Endothelial cell of umbilical vein (primary cell): ENCODE measurements at regions of chr1 and their contacts with region 1.

Region 1: DNA sequence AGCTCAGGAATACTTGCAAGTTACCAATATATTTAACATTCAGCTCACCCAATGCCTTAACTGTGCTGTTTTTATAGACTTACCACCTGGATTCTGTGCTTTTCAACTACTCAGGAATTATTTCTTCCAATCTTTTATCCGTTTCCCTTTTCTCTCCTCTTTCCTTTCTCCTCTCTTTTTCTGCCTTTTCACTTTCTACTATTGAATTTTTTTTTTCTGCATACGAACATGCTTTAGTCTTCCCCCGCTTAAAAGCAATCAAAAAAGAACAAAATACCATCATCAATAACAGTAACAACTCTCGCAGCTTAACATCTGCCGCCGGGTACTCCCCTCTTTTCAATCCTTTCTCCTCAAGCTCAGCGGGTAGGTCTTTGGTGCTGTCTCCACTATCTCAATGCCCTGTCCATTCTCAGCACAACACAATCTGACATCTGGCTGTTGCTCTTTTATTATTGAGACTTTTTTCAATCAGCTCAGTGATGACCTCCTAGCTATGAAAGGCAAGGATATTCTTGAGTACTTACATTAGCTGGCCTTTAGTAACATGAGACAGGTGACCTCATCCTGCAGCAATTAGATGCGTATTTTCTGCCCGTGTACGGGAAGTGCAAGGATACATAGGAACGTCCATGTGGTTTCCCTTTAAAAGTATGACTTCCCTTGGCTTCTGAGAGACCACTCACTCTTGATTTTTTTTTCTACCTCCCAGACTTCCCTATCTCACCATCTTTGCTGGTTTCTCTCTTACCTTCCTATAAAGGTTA is 40.2 kb upstream of the SIPA1L2 start:
- DNase-seq: peak; percentile 26
- H3K4me3 ChIP-seq: no peak overlapping the region
- H3K27ac ChIP-seq: no peak overlapping the region
- H3K4me1 ChIP-seq: peaks cover 9% of the 10 kb centered on the region
- H3K27me3 ChIP-seq: no peaks in the 10 kb centered on the region
- CTCF ChIP-seq: no peak
- POLR2A ChIP-seq: no peak

Region 2: DNA sequence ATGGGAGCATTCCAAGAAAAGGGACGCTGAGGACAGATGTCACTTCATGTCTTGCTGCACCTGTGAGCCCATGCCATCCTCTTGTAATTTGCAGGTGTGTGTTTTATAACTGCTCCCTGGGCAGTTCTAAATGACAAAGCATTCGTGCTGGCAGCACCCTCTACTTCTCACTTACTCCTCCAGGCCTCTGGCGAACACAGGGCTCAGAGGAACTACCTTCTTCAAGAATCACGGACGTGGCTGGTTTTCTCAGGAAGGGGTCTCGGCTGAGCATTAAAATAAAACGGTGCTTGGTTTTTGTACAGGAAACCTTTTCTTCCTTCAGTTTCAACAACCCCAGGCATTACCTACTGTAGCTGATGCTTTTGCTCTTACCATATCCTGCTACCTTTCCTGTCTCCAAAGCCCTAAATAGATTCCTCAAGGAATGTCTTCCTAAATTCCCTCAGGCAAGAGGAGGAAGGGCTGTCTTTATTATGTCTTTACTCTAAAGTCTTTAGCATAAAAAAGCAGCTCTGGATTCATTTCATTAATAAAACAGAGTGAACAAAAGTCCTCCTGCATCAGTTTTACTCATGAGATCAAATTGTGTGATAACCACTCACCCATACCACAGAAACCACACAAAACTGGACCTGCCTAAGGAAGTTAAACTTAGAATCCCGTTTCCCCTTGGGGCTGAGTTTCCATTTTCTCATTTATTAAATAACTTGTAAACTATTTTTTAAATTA is 56.0 kb after region 1 on chr1:
- CTCF ChIA-PET with region 1: no interaction called
- POLR2A ChIA-PET with region 1: no interaction called
- dilution Hi-C with region 1: loop called (anchors 10 kb)
- intact Hi-C with region 1: no loop called
- DNase-seq: no peak
- H3K4me3 ChIP-seq: no peak overlapping the region
- H3K27ac ChIP-seq: no peak overlapping the region
- H3K4me1 ChIP-seq: no peaks in the 10 kb centered on the region
- H3K27me3 ChIP-seq: no peaks in the 10 kb centered on the region
- CTCF ChIP-seq: no peak
- POLR2A ChIP-seq: no peak

Region 3: GRCh38 chr1:233261206-233261605 is 591.0 kb after region 1 on chr1:
- CTCF ChIA-PET with region 1: no interaction called
- POLR2A ChIA-PET with region 1: no interaction called
- dilution Hi-C with region 1: no loop called
- intact Hi-C with region 1: no loop called
- DNase-seq: no peak
- H3K4me3 ChIP-seq: no peak overlapping the region
- H3K27ac ChIP-seq: no peak overlapping the region
- H3K4me1 ChIP-seq: no peaks in the 10 kb centered on the region
- H3K27me3 ChIP-seq: no peaks in the 10 kb centered on the region
- CTCF ChIP-seq: no peak
- POLR2A ChIP-seq: no peak